GM12878 (cell line): ENCODE measurements at regions of chr6 and their contacts with region 1.

Region 1: DNA sequence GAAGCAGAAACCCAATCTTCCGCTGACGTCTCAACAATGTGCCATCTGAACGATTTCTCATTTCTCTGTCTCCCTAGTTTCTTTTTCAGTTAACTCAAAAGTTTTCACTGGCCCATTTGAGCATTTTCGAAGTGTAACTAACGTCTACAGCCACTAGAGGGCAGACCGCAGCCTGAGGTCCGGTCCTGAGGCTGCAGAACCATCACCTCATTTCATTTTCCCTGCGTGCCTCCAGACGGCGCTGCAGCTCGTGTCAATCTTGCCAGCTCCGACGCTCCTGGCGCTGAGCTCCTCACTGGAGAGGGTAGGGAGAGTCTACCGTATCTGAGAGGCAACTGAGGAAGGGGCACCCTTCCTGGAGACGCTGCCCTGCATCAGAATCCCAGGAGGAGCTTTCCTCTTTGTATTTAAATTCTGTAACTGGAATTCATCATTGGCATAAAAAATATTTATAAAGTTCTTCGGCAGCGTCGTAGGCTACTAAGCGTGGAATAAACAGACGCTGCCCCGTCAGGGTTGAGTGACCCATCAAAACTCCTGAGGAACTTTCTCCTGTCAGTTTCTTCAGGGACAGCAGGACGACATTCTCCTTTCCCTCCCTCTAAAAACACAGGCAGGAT is 28.5 kb upstream of the DTNBP1 start:
- DNase-seq: peak; percentile 74
- ATAC-seq: peak; percentile 98
- H3K4me3 ChIP-seq: no peak overlapping the region
- H3K27ac ChIP-seq: no peak overlapping the region
- H3K4me1 ChIP-seq: no peaks in the 10 kb centered on the region; the same call in 1 of the 2 replicates
- H3K27me3 ChIP-seq: no peaks in the 10 kb centered on the region
- CTCF ChIP-seq: peak; percentile 100; a peak in 5 of 6 replicates
- EP300 ChIP-seq: 0 out of 4 replicates have a peak, but pooled peaks of 1 of the 2 experiments have one; percentile 8
- POLR2A ChIP-seq: no peak
- RAD21 ChIP-seq: peak; percentile 100

Region 2: DNA sequence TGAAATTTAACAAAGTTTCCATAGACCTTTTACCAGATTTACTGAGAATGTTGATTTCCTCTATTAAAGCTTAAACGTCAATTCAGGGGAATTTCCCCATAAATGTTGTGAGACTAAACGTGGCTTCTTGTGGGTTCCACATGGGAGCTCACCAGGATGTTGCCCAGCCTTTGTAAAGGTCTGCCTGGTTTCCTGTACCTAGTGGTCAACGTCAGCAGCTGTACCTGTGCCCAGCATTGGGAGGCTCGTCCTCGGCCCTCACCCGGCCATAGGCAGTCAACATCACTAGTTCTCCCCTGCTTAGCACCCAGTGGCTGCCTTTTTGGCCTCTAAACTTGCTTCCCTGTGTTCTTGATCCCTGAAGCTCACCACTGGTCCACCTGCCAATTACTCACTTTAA is 1595.9 kb before region 1 on chr6:
- CTCF ChIA-PET with region 1: no interaction called
- POLR2A ChIA-PET with region 1: no interaction called
- RAD21 ChIA-PET with region 1: no interaction called
- SMC1A ChIA-PET with region 1: no interaction called
- in situ Hi-C with region 1: no loop called
- intact Hi-C with region 1: no loop called
- DNase-seq: no peak
- ATAC-seq: peak; percentile 79
- H3K4me3 ChIP-seq: no peak overlapping the region
- H3K27ac ChIP-seq: peak overlapping the region; percentile 80; the same call in 1 of the 2 replicates
- H3K4me1 ChIP-seq: peaks cover 56% of the 10 kb centered on the region
- H3K27me3 ChIP-seq: no peaks in the 10 kb centered on the region
- CTCF ChIP-seq: no peak
- EP300 ChIP-seq: peak; percentile 87 to 91; a peak in 3 of 4 replicates
- POLR2A ChIP-seq: no peak
- RAD21 ChIP-seq: no peak

Region 3: DNA sequence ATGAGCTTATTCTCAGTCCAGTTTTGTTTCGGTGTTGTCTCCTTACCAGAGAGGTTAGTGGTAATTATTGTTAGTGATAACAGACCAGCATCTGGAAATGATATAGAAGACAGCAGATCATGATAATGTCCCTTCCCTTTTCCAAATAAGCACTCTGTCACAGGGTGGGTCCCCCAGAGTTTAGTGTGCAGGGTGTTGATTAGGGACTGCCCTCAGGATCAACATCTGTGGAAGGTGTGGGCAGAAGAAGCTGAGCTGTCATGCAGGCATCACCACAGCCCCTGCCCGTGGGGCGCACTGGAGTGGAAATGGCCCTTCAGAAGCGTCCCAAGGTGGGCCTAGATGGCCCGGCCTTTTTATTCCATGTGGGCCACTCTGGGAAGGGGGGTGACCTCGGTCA is 39.1 kb after region 1 on chr6:
- CTCF ChIA-PET with region 1: interaction called, 10 read pairs
- POLR2A ChIA-PET with region 1: no interaction called
- RAD21 ChIA-PET with region 1: interaction called, 35 read pairs
- SMC1A ChIA-PET with region 1: interaction called, 72 read pairs
- in situ Hi-C with region 1: no loop called
- intact Hi-C with region 1: no loop called
- DNase-seq: no peak
- ATAC-seq: no peak
- H3K4me3 ChIP-seq: no peak overlapping the region
- H3K27ac ChIP-seq: no peak overlapping the region
- H3K4me1 ChIP-seq: no peaks in the 10 kb centered on the region
- H3K27me3 ChIP-seq: no peaks in the 10 kb centered on the region
- CTCF ChIP-seq: no peak
- EP300 ChIP-seq: no peak
- POLR2A ChIP-seq: no peak
- RAD21 ChIP-seq: no peak

Region 4: DNA sequence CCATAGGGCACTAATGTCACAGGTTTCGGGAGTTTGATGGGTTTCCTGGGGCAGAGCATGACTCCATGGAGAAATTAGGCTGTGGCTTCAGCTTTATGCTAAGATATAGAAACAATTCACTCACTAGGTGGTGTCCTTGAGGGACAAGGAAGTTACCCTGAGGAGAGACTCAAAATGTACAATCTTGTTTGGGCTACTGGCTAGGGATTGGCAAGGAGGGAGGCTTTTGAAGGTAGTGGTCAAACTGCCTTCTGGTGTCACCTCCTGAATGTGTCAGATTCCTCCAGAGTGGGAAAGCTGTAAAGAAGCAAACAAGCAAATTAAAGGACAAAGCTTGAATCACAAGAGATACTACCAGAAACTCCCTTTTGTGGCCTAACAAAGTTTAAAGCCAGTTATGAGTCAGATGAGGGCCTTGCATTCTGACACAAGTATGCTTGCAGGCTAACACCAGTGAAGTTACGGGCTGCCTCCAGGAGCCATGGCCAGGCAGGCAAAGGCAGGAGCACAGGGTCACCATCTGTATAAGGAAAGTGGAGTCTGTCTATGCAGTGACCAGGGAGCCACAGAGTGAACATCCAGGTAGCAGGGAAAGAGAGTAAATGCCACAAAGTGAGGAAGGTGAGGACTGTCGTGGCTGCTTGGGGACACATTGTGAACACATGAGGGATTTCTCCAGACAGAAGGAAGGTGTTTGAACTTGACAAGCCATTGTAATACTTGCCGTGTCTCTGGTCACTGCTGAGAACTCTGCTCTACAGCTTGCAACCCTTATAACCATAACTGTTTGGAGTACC is 79.2 kb after region 1 on chr6:
- CTCF ChIA-PET with region 1: interaction called, 26 read pairs
- POLR2A ChIA-PET with region 1: interaction called, 3 read pairs
- RAD21 ChIA-PET with region 1: interaction called, 17 read pairs
- SMC1A ChIA-PET with region 1: interaction called, 20 read pairs
- in situ Hi-C with region 1: no loop called
- intact Hi-C with region 1: no loop called
- DNase-seq: peak; percentile 62
- ATAC-seq: peak; percentile 88
- H3K4me3 ChIP-seq: no peak overlapping the region
- H3K27ac ChIP-seq: peak overlapping the region; percentile 38
- H3K4me1 ChIP-seq: peaks cover 7% of the 10 kb centered on the region
- H3K27me3 ChIP-seq: no peaks in the 10 kb centered on the region
- CTCF ChIP-seq: peak; percentile 24 to 32 (median 30); a peak in 5 of 6 replicates
- EP300 ChIP-seq: peak; percentile 32 to 76; a peak in 2 of 4 replicates
- POLR2A ChIP-seq: no peak
- RAD21 ChIP-seq: peak; percentile 44

Region 5: DNA sequence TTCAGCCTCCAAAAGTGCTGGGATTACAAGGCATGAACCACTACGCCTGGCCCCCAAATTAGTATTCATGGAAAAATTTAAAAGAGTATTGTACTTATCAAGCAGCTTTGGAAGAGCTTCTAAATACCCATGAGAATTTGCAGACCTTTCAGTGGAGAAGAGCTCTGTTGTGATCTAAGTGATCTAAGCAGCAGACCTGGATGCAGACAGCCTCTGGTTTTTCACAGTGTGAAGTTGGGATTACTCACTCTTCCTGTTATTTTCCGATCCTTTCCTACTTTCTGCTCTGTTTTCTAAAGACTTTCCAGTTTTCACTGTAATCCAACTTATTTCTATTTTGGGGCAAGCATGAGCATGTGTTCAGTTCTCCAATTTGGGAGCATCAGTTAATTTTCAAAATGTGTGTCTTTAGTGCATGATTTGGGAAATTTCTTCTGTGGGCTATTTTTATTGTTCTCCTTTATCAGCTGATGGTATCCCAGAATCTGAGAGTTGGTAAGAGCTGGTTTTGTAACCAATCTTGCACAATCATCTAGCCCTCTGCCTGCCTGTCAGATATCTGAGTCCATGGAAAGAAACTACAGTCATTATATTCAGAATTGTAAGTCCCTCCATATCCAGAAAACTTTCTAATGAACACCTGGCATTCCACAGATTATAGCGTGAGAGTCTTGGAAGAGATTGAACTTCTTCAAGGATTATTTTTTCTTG is 179.1 kb after region 1 on chr6:
- CTCF ChIA-PET with region 1: interaction called, 9 read pairs
- POLR2A ChIA-PET with region 1: no interaction called
- RAD21 ChIA-PET with region 1: interaction called, 20 read pairs
- SMC1A ChIA-PET with region 1: interaction called, 20 read pairs
- in situ Hi-C with region 1: no loop called
- intact Hi-C with region 1: loop called (anchors 5 kb)
- DNase-seq: no peak
- ATAC-seq: no peak
- H3K4me3 ChIP-seq: no peak overlapping the region
- H3K27ac ChIP-seq: no peak overlapping the region
- H3K4me1 ChIP-seq: no peaks in the 10 kb centered on the region
- H3K27me3 ChIP-seq: no peaks in the 10 kb centered on the region
- CTCF ChIP-seq: no peak
- EP300 ChIP-seq: no peak
- POLR2A ChIP-seq: no peak
- RAD21 ChIP-seq: no peak

Region 6: DNA sequence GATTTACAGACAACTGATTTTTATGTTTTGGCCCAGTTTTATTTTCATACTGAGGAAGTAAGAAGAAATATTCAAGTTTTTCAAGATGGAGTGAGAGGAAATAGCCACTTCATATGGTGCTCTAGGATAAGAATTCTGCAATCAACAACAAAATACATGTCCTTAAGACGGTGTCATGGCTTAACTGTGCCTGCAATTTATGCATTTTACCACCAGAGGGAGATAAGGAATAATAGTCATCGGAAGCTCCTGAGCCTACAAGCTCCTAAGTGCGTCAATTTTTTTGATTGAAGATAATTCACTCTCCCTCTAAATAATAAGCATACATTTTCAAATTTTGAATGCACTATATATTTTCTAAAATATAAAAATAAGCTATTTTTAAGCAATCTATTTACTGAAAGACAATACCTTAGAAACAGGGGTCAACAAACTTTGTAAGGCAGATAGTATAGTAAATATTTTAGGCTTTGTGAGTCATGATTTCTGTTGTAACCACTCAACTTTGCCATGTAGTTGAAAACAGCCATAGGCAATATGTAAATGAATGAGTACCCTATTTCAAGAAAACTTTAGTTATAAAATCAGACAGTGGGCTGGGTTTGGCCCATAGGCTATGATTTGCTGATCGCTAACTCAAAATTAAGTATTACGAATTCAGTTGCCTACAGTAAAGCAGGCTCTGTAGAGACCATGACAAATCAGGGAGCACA is 202.4 kb after region 1 on chr6:
- CTCF ChIA-PET with region 1: interaction called, 26 read pairs
- POLR2A ChIA-PET with region 1: no interaction called
- RAD21 ChIA-PET with region 1: interaction called, 7 read pairs
- SMC1A ChIA-PET with region 1: interaction called, 29 read pairs
- in situ Hi-C with region 1: no loop called
- intact Hi-C with region 1: no loop called
- DNase-seq: no peak
- ATAC-seq: 0 out of 3 replicates have a peak, but pooled peaks have one; percentile 22
- H3K4me3 ChIP-seq: no peak overlapping the region
- H3K27ac ChIP-seq: no peak overlapping the region
- H3K4me1 ChIP-seq: peaks cover 14% of the 10 kb centered on the region
- H3K27me3 ChIP-seq: no peaks in the 10 kb centered on the region
- CTCF ChIP-seq: peak in 2 of 3 experiments; percentile 37 to 59; a peak in 3 of 6 replicates
- EP300 ChIP-seq: no peak
- POLR2A ChIP-seq: no peak
- RAD21 ChIP-seq: peak; percentile 41

Region 7: GRCh38 chr6:16168858-16169257 is 477.5 kb after region 1 on chr6:
- CTCF ChIA-PET with region 1: interaction called, 24 read pairs
- POLR2A ChIA-PET with region 1: no interaction called
- RAD21 ChIA-PET with region 1: interaction called, 28 read pairs
- SMC1A ChIA-PET with region 1: interaction called, 20 read pairs
- in situ Hi-C with region 1: no loop called
- intact Hi-C with region 1: loop called (anchors 1 kb)
- DNase-seq: peak; percentile 32
- ATAC-seq: peak; percentile 86
- H3K4me3 ChIP-seq: no peak overlapping the region
- H3K27ac ChIP-seq: no peak overlapping the region
- H3K4me1 ChIP-seq: peaks cover 13% of the 10 kb centered on the region
- H3K27me3 ChIP-seq: no peaks in the 10 kb centered on the region
- CTCF ChIP-seq: peak; percentile 56 to 66 (median 65)
- EP300 ChIP-seq: no peak
- POLR2A ChIP-seq: no peak
- RAD21 ChIP-seq: peak; percentile 87

Region 8: GRCh38 chr6:16206595-16207037 is 515.3 kb after region 1 on chr6:
- CTCF ChIA-PET with region 1: interaction called, 37 read pairs
- POLR2A ChIA-PET with region 1: interaction called, 5 read pairs
- RAD21 ChIA-PET with region 1: interaction called, 52 read pairs
- SMC1A ChIA-PET with region 1: interaction called, 32 read pairs
- in situ Hi-C with region 1: no loop called
- intact Hi-C with region 1: loop called (anchors 1 kb)
- DNase-seq: no peak
- ATAC-seq: peak; percentile 57
- H3K4me3 ChIP-seq: no peak overlapping the region
- H3K27ac ChIP-seq: no peak overlapping the region
- H3K4me1 ChIP-seq: peaks cover 16% of the 10 kb centered on the region
- H3K27me3 ChIP-seq: peaks cover 0 to 3% of the 10 kb centered on the region in 2 experiments; a peak in 1 of 4 replicates
- CTCF ChIP-seq: peak; percentile 86 to 95 (median 93)
- EP300 ChIP-seq: no peak
- POLR2A ChIP-seq: no peak
- RAD21 ChIP-seq: peak; percentile 96